Astrocyte of the cerebellum (primary cell): ENCODE measurements at regions of chr16 and their contacts with region 1.

Region 1: GRCh38 chr16:31714903-31715504 is 158.6 kb upstream of the ZNF267 start:
- DNase-seq: no peak
- H3K4me3 ChIP-seq: no peak overlapping the region
- CTCF ChIP-seq: no peak

Region 2: GRCh38 chr16:31780342-31780741 is 65.3 kb after region 1 on chr16:
- in situ Hi-C with region 1: loop called (anchors 5 kb)
- DNase-seq: no peak
- H3K4me3 ChIP-seq: no peak overlapping the region
- CTCF ChIP-seq: no peak

Region 3: GRCh38 chr16:31833047-31833446 is 118.0 kb after region 1 on chr16:
- in situ Hi-C with region 1: no loop called
- DNase-seq: no peak
- H3K4me3 ChIP-seq: no peak overlapping the region
- CTCF ChIP-seq: no peak